AG04450 (cell line): ENCODE measurements at regions of chr11 and their contacts with region 1.

Region 1: GRCh38 chr11:112113539-112114457 is 27.1 kb downstream of the SDHD start:
- DNase-seq: no peak
- H3K4me3 ChIP-seq: no peak overlapping the region
- H3K27ac ChIP-seq: no peak overlapping the region
- H3K27me3 ChIP-seq: no peaks in the 10 kb centered on the region
- CTCF ChIP-seq: peak; percentile 77

Region 2: DNA sequence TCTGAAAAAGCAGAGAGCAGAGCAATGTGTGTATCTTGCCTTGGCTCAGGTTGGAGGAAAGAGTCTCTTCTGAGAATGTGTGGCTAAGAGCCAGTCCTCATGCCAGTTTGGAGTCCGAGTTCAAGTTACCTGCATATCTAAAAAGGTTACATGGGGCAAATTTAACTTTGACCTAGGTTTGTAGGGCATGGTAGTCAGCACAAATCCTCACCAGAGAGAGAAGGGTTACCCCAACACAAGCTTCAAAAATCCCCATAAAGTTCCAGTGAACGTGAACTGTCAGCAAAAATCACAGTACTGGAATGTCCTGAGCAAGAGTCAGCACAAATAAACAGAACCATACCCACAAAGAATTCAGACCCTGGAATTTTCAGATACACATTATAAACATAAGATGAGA is 13.3 kb before region 1 on chr11:
- CTCF ChIA-PET with region 1: interaction called, 67 read pairs
- POLR2A ChIA-PET with region 1: no interaction called
- DNase-seq: peak; percentile 45
- H3K4me3 ChIP-seq: no peak overlapping the region
- H3K27ac ChIP-seq: peak overlapping the region; percentile 78
- H3K27me3 ChIP-seq: no peaks in the 10 kb centered on the region
- CTCF ChIP-seq: no peak

Region 3: GRCh38 chr11:112150517-112150916 is 36.7 kb after region 1 on chr11:
- CTCF ChIA-PET with region 1: interaction called, 17 read pairs
- POLR2A ChIA-PET with region 1: no interaction called
- DNase-seq: no peak
- H3K4me3 ChIP-seq: no peak overlapping the region
- H3K27ac ChIP-seq: no peak overlapping the region
- H3K27me3 ChIP-seq: no peaks in the 10 kb centered on the region
- CTCF ChIP-seq: no peak

Region 4: DNA sequence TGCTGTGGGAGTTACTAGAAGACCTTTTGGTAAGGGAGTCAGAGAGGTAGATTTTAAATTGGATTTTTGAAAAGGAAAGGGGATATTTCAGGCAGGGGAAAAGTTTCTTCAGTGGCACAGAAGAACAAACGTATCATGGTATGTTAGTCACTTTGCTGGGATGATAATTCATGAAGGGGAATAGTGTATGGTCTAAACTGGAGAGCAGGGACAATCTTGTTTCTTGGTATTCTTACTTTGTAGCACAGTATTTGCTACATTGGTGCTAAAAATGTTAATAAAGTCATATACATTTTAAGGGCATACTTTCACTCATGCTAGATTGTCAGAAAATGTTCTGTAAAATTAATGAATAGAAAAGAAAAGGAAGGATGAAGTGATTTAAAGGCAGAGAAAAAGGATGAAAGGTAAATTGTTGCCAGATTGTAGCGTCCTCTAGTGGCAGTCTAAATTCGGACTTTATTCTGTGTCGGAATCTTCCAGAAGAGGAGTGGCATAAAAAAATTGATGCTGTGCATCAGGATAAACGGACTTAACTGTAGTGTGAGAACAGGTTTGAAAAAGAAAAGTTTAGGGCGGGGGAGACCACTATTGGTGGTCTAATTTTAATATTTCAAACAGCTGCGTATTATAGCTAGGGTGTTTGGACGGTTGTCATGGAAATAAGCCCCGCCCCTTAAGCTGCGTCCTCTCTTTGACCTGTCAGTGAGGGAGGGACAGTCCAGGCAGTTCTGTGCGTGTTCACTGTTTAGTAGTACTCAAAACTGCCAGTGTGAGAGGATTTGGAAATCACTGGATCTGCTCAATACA is 61.2 kb after region 1 on chr11 and contains the start of gene BCO2:
- CTCF ChIA-PET with region 1: interaction called, 35 read pairs
- POLR2A ChIA-PET with region 1: no interaction called
- DNase-seq: no peak
- H3K4me3 ChIP-seq: peak within 1 kb of the TSS; percentile 42
- H3K27ac ChIP-seq: no peak within 1 kb of the TSS
- H3K27me3 ChIP-seq: no peaks in the 10 kb centered on the region
- CTCF ChIP-seq: peak; percentile 92
- polyA plus RNA-seq, gene BCO2: 0.94 and 1.3 TPM in 2 replicates

Region 5: DNA sequence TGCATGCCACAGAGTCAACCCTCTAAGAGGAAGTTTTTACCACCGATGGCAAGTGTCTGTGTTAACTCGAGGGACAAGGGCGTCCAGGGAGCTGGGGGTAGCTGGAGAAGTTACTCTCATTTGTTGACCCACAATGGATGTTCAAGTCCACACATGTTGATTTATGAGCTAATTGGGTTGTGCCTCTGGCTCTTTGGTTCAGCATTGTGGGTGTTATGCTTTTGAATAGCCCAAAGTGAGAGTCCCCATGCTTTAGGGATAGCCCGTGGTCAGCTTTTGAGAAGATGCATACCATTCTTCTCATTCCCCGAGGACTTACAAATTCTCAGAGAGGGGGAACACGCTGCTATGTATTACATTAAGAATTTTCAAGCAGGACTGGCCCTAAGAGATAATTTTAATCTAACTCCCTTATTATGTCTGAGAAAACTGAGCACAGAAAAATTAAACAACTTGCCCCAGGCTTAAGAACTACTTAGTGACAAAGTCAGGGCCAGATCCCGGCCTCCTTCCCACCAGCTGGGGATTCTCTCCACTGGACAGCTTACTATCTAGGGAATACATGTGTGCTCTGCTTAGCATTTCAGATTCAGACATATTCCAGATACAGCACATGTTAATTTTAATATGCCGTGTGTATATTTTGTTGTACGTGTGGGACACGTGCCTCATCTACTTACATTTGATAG is 152.1 kb after region 1 on chr11:
- CTCF ChIA-PET with region 1: interaction called, 11 read pairs
- POLR2A ChIA-PET with region 1: no interaction called
- DNase-seq: no peak
- H3K4me3 ChIP-seq: no peak overlapping the region
- H3K27ac ChIP-seq: no peak overlapping the region
- H3K27me3 ChIP-seq: peaks cover under 1% of the 10 kb centered on the region
- CTCF ChIP-seq: no peak